ENCODE measurements at regions of chr16 and their contacts with region 1.

Region 1: GRCh38 chr16:31458844-31459721 is at the start of gene ARMC5:
- DNase-seq: peak; percentile 90
- ATAC-seq: peak; percentile 80
- H3K4me3 ChIP-seq: peak within 1 kb of the TSS; percentile 95
- H3K27ac ChIP-seq: peak within 1 kb of the TSS; percentile 100
- H3K4me1 ChIP-seq: peaks cover 16% of the 10 kb centered on the region
- H3K27me3 ChIP-seq: no peaks in the 10 kb centered on the region
- CTCF ChIP-seq: peak; percentile 48 to 71 (median 67)
- EP300 ChIP-seq: 0 out of 4 replicates have a peak, but pooled peaks of 1 of the 2 experiments have one; percentile 9
- POLR2A ChIP-seq: peak; percentile 95
- RAD21 ChIP-seq: 0 out of 2 replicates have a peak, but pooled peaks have one; percentile 13
- polyA plus RNA-seq, gene ARMC5: 0.06 to 0.51 TPM

Region 2: GRCh38 chr16:30957456-30958174 is 501.5 kb before region 1 on chr16 and contains the start of gene SETD1A:
- CTCF ChIA-PET with region 1: interaction called, 16 read pairs
- POLR2A ChIA-PET with region 1: no interaction called
- RAD21 ChIA-PET with region 1: interaction called, 3 read pairs
- SMC1A ChIA-PET with region 1: interaction called, 6 read pairs
- in situ Hi-C with region 1: no loop called
- intact Hi-C with region 1: no loop called
- DNase-seq: peak; percentile 57
- ATAC-seq: peak; percentile 92
- H3K4me3 ChIP-seq: peak within 1 kb of the TSS; percentile 92
- H3K27ac ChIP-seq: peak within 1 kb of the TSS; percentile 100
- H3K4me1 ChIP-seq: peaks cover 13% of the 10 kb centered on the region
- H3K27me3 ChIP-seq: no peaks in the 10 kb centered on the region
- CTCF ChIP-seq: no peak
- EP300 ChIP-seq: peak in 1 of 2 experiments; percentile 99; a peak in 2 of 4 replicates
- POLR2A ChIP-seq: peak; percentile 75
- RAD21 ChIP-seq: no peak
- polyA plus RNA-seq, gene SETD1A: 0.02 to 0.18 TPM

Region 3: GRCh38 chr16:31286421-31287032 is 172.6 kb before region 1 on chr16:
- CTCF ChIA-PET with region 1: no interaction called
- POLR2A ChIA-PET with region 1: no interaction called
- RAD21 ChIA-PET with region 1: no interaction called
- SMC1A ChIA-PET with region 1: no interaction called
- in situ Hi-C with region 1: no loop called
- intact Hi-C with region 1: no loop called
- DNase-seq: peak; percentile 55
- ATAC-seq: peak; percentile 94
- H3K4me3 ChIP-seq: peak overlapping the region; percentile 18; the same call in 1 of the 2 replicates
- H3K27ac ChIP-seq: no peak overlapping the region
- H3K4me1 ChIP-seq: peaks cover 18% of the 10 kb centered on the region
- H3K27me3 ChIP-seq: no peaks in the 10 kb centered on the region
- CTCF ChIP-seq: no peak
- EP300 ChIP-seq: no peak
- POLR2A ChIP-seq: no peak
- RAD21 ChIP-seq: no peak

Region 4: GRCh38 chr16:31440516-31441184 is 18.4 kb before region 1 on chr16:
- CTCF ChIA-PET with region 1: interaction called, 71 read pairs
- POLR2A ChIA-PET with region 1: no interaction called
- RAD21 ChIA-PET with region 1: interaction called, 7 read pairs
- SMC1A ChIA-PET with region 1: interaction called, 4 read pairs
- in situ Hi-C with region 1: no loop called
- intact Hi-C with region 1: loop called (anchors 1 kb)
- DNase-seq: no peak
- ATAC-seq: no peak
- H3K4me3 ChIP-seq: no peak overlapping the region
- H3K27ac ChIP-seq: no peak overlapping the region
- H3K4me1 ChIP-seq: no peaks in the 10 kb centered on the region
- H3K27me3 ChIP-seq: no peaks in the 10 kb centered on the region
- CTCF ChIP-seq: no peak
- EP300 ChIP-seq: no peak
- POLR2A ChIP-seq: no peak
- RAD21 ChIP-seq: no peak

Region 5: DNA sequence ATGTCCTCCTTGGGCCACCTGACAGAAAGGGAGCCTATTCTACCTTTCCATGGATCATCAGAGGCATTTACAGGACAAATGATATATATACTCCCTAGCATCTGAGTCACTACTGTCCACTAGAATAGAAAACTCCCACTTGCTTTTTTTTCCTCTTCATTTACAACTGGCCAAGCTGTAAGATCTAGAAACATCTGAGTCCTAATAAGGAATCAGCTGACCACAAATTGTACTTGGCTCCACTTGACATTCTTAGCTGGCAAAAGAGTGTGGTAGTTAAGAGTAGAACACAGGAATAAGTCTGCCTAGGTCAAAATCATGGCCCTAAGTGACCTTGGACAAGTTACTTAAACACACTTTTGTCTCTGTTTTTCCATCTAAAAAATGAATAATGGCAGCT is 43.9 kb after region 1 on chr16:
- CTCF ChIA-PET with region 1: interaction called, 25 read pairs
- POLR2A ChIA-PET with region 1: interaction called, 4 read pairs
- RAD21 ChIA-PET with region 1: interaction called, 3 read pairs
- SMC1A ChIA-PET with region 1: interaction called, 9 read pairs
- in situ Hi-C with region 1: no loop called
- intact Hi-C with region 1: loop called (anchors 5 kb)
- DNase-seq: no peak
- ATAC-seq: no peak
- H3K4me3 ChIP-seq: no peak overlapping the region
- H3K27ac ChIP-seq: no peak overlapping the region
- H3K4me1 ChIP-seq: peaks cover 14% of the 10 kb centered on the region
- H3K27me3 ChIP-seq: no peaks in the 10 kb centered on the region
- CTCF ChIP-seq: no peak
- EP300 ChIP-seq: no peak
- POLR2A ChIP-seq: no peak
- RAD21 ChIP-seq: no peak

Region 6: GRCh38 chr16:31537362-31538242 is 78.5 kb after region 1 on chr16:
- CTCF ChIA-PET with region 1: no interaction called
- POLR2A ChIA-PET with region 1: no interaction called
- RAD21 ChIA-PET with region 1: no interaction called
- SMC1A ChIA-PET with region 1: no interaction called
- in situ Hi-C with region 1: no loop called
- intact Hi-C with region 1: no loop called
- DNase-seq: no peak
- ATAC-seq: no peak
- H3K4me3 ChIP-seq: no peak overlapping the region
- H3K27ac ChIP-seq: no peak overlapping the region
- H3K4me1 ChIP-seq: no peaks in the 10 kb centered on the region
- H3K27me3 ChIP-seq: no peaks in the 10 kb centered on the region
- CTCF ChIP-seq: no peak
- EP300 ChIP-seq: no peak
- POLR2A ChIP-seq: no peak
- RAD21 ChIP-seq: no peak

Region 7: GRCh38 chr16:31700526-31701388 is 241.7 kb after region 1 on chr16:
- CTCF ChIA-PET with region 1: interaction called, 28 read pairs
- POLR2A ChIA-PET with region 1: no interaction called
- RAD21 ChIA-PET with region 1: interaction called, 21 read pairs
- SMC1A ChIA-PET with region 1: interaction called, 10 read pairs
- in situ Hi-C with region 1: loop called (anchors 5 kb)
- intact Hi-C with region 1: loop called (anchors 2 kb)
- DNase-seq: peak; percentile 67
- ATAC-seq: peak; percentile 95
- H3K4me3 ChIP-seq: peak overlapping the region; percentile 91
- H3K27ac ChIP-seq: peak overlapping the region; percentile 88
- H3K4me1 ChIP-seq: peaks cover 5% of the 10 kb centered on the region; the same call in 1 of the 2 replicates
- H3K27me3 ChIP-seq: no peaks in the 10 kb centered on the region
- CTCF ChIP-seq: peak in 2 of 3 experiments; percentile 6 to 7; a peak in 1 of 6 replicates
- EP300 ChIP-seq: peak; percentile 52 to 81; a peak in 3 of 4 replicates
- POLR2A ChIP-seq: peak; percentile 80
- RAD21 ChIP-seq: no peak

Region 8: GRCh38 chr16:31868691-31869167 is 409.6 kb after region 1 on chr16:
- CTCF ChIA-PET with region 1: interaction called, 47 read pairs
- POLR2A ChIA-PET with region 1: interaction called, 20 read pairs
- RAD21 ChIA-PET with region 1: interaction called, 20 read pairs
- SMC1A ChIA-PET with region 1: interaction called, 26 read pairs
- in situ Hi-C with region 1: loop called (anchors 5 kb)
- intact Hi-C with region 1: loop called (anchors 1 kb)
- DNase-seq: no peak
- ATAC-seq: peak; percentile 78
- H3K4me3 ChIP-seq: peak overlapping the region; percentile 28; the same call in 1 of the 2 replicates
- H3K27ac ChIP-seq: no peak overlapping the region
- H3K4me1 ChIP-seq: peaks cover 24% of the 10 kb centered on the region
- H3K27me3 ChIP-seq: no peaks in the 10 kb centered on the region
- CTCF ChIP-seq: peak; percentile 59 to 71 (median 70)
- EP300 ChIP-seq: no peak
- POLR2A ChIP-seq: no peak
- RAD21 ChIP-seq: peak; percentile 87